Right cardiac atrium (tissue), 5 donors: ENCODE measurements at regions of chr12 and their contacts with region 1.

Region 1: DNA sequence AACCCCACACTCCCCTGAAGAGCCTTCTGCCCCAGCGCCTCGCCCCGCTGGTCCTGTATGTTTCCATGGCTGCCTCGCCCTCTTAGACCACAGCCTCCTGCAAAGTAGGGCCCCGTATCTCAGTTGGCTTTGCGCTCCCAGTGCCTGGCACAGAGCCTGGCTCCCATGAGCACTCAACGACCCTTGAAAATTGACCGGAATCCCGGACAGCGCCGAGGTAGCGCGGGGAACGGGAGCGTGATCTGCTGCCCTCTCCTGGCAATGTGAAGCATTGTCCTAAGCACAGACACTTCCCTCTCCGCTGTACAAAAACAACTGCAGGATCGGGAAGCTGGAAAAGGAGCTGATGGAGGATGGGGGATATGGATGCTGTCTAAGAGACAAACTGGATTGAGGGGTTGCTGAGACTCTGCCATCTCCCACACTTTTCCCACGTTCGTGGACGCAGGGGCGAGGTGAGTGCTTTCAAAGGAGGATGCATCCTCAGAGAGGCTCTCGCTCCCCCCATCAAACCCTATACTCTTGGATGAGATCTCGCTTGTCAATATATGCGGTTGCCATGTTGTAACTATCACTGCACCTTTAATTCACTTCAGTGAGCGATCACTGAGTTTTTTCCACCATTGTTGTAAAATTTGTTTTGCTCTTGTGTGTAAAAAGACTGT is 10.7 kb upstream of the FKBP4 start:
- DNase-seq: peak; percentile 69 to 89 (median 88)
- ATAC-seq: peak; percentile 93 to 96
- H3K4me3 ChIP-seq: no peak overlapping the region
- H3K27ac ChIP-seq: no peak overlapping the region
- H3K4me1 ChIP-seq: no peaks in the 10 kb centered on the region
- H3K27me3 ChIP-seq: no peaks in the 10 kb centered on the region

Region 2: GRCh38 chr12:2354151-2354991 is 429.7 kb before region 1 on chr12:
- intact Hi-C with region 1: no loop called
- DNase-seq: no peak
- ATAC-seq: peak in 1 of 2 donors; percentile 54
- H3K4me3 ChIP-seq: no peak overlapping the region
- H3K27ac ChIP-seq: no peak overlapping the region
- H3K4me1 ChIP-seq: peaks cover 11% of the 10 kb centered on the region
- H3K27me3 ChIP-seq: no peaks in the 10 kb centered on the region

Region 3: DNA sequence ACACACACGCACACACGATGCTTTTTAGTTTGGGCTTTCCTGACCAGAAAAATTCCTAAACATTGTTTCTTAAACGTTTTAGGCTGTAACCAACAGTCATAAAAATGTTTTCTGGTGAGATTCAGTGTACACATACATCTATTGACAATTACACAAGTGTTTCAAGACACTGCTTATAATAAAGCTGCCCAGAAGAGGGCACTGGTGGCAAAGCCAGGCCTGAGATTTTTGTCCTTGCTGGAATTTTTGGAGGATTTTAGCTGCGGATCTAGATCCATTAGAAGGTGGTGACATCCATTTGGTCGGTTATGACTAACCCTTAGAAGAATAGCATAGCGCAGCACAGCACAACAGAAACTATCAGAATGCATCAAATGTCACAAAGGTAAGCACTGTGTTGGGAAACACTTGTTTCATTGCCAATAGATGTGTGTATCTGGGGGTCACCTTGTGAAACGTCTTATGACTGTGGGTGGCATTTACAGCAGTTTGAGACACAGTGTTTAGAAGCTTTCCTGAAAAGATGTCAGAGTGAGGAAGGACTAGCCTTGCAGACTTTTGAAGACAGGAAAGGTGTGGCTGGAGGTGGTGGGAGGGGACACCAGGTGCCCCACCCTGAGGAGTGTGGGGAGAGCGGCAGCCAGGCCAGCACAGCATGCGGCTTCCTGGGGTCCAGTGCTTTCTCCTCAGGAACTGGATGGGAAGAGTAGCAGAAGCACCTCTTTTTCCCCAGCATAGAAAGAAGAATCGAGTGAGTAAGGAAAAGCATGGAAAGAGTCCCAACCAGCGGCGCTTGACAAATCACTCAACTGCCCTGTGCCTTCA is 44.0 kb before region 1 on chr12:
- intact Hi-C with region 1: loop called in 1 of 4 experiments (anchors 5 kb)
- DNase-seq: no peak
- ATAC-seq: peak in 1 of 2 donors; percentile 16
- H3K4me3 ChIP-seq: no peak overlapping the region
- H3K27ac ChIP-seq: no peak overlapping the region
- H3K4me1 ChIP-seq: no peaks in the 10 kb centered on the region
- H3K27me3 ChIP-seq: no peaks in the 10 kb centered on the region